ENCODE measurements at regions of chr3 and their contacts with region 1.

Region 1: GRCh38 chr3:64224826-64225610 is at the start of gene PRICKLE2:
- DNase-seq: peak; percentile 88 to 94
- H3K4me3 ChIP-seq: peak within 1 kb of the TSS; percentile 41 to 43
- H3K27ac ChIP-seq: peak within 1 kb of the TSS; percentile 85
- H3K4me1 ChIP-seq: peaks cover 0 to 61% (median 48%) of the 10 kb centered on the region in 4 donors
- H3K27me3 ChIP-seq: no peaks in the 10 kb centered on the region
- CTCF ChIP-seq: peak; percentile 28 to 36

Region 2: GRCh38 chr3:64187065-64187959 is 37.7 kb before region 1 on chr3:
- intact Hi-C with region 1: loop called (anchors 5 kb)
- DNase-seq: peak in 1 of 2 donors; percentile 77
- H3K4me3 ChIP-seq: no peak overlapping the region
- H3K27ac ChIP-seq: peak overlapping the region; percentile 65 to 70
- H3K4me1 ChIP-seq: peaks cover 5 to 72% (median 53%) of the 10 kb centered on the region in 4 donors
- H3K27me3 ChIP-seq: no peaks in the 10 kb centered on the region
- CTCF ChIP-seq: no peak

Region 3: DNA sequence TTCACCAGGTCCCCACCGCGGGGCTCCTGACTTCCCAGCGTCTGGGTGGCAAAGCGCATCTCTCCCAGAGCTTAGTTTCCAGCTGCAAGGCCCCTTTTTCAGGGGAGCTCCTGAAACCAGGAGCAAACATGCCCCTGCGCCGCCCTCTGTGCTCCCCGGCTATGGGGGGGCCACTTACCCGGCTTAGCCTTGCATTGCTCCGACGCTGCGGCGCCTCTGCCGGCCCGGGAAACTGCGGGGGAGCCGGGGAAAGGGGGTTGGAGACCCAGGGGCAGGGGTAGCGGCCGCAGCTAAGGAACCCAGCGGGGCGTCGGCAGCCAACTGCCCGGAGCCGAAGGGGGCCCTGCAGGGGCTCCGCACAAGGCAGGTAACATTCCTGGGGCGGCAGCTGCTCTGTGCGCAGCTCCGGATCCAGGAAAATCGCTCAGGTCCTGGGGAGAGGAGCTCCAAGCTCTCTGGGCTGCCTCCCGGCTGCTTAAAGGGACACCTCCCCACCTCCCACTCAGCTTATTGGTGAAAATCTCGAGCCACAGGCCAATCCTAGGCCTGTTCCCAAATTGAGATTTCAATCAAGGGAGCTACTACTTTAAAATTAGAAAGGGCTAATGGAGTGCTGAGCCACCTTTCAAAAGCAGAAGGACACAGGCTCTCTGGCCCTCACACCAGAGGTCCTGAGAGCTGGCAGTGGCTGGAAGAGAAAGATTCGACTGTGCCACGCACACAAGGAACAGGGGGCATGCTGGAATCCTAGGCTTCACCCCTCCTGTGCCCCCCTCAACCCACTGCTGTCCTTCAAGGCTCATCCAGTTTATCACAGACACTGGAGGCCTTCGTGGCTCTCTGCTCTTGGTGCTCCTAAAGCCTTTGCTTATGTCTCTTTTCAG is 42.9 kb after region 1 on chr3:
- intact Hi-C with region 1: loop called (anchors 5 kb)
- DNase-seq: peak; percentile 78 to 87
- H3K4me3 ChIP-seq: peak overlapping the region; percentile 83 to 85
- H3K27ac ChIP-seq: peak overlapping the region; percentile 91
- H3K4me1 ChIP-seq: peaks cover 0 to 38% (median 26%) of the 10 kb centered on the region in 4 donors
- H3K27me3 ChIP-seq: no peaks in the 10 kb centered on the region
- CTCF ChIP-seq: peak in 1 of 2 experiments; percentile 7

Measured in tibial artery (tissue), 4 donors.